ENCODE measurements at regions of chr10 and their contacts with region 1.

Region 1: GRCh38 chr10:102151774-102152544 is at the start of gene NOLC1:
- DNase-seq: peak; percentile 100
- H3K4me3 Mint-ChIP-seq: peak within 1 kb of the TSS; percentile 98
- H3K27ac Mint-ChIP-seq: peak within 1 kb of the TSS; percentile 96
- H3K4me1 Mint-ChIP-seq: peaks cover 53% of the 10 kb centered on the region
- H3K27me3 Mint-ChIP-seq: no peaks in the 10 kb centered on the region
- total RNA-seq, gene NOLC1: 182 to 194 TPM

Region 2: GRCh38 chr10:101848894-101849351 is 303.0 kb before region 1 on chr10:
- CTCF ChIA-PET with region 1: no interaction called
- intact Hi-C with region 1: no loop called
- DNase-seq: no peak
- H3K4me3 Mint-ChIP-seq: no peak overlapping the region
- H3K27ac Mint-ChIP-seq: no peak overlapping the region
- H3K4me1 Mint-ChIP-seq: peaks cover 6% of the 10 kb centered on the region
- H3K27me3 Mint-ChIP-seq: no peaks in the 10 kb centered on the region

Region 3: GRCh38 chr10:102020938-102021337 is 131.0 kb before region 1 on chr10:
- CTCF ChIA-PET with region 1: no interaction called
- intact Hi-C with region 1: no loop called
- DNase-seq: peak; percentile 38
- H3K4me3 Mint-ChIP-seq: no peak overlapping the region
- H3K27ac Mint-ChIP-seq: no peak overlapping the region
- H3K4me1 Mint-ChIP-seq: no peaks in the 10 kb centered on the region
- H3K27me3 Mint-ChIP-seq: no peaks in the 10 kb centered on the region

Region 4: GRCh38 chr10:102055647-102056419 is 96.1 kb before region 1 on chr10 and contains the start of gene ARMH3:
- CTCF ChIA-PET with region 1: no interaction called
- intact Hi-C with region 1: loop called (anchors 2 kb)
- DNase-seq: peak; percentile 96
- H3K4me3 Mint-ChIP-seq: peak within 1 kb of the TSS; percentile 91
- H3K27ac Mint-ChIP-seq: peak within 1 kb of the TSS; percentile 90
- H3K4me1 Mint-ChIP-seq: peaks cover 41% of the 10 kb centered on the region
- H3K27me3 Mint-ChIP-seq: no peaks in the 10 kb centered on the region
- total RNA-seq, gene ARMH3: 12.3 to 12.6 TPM

Region 5: DNA sequence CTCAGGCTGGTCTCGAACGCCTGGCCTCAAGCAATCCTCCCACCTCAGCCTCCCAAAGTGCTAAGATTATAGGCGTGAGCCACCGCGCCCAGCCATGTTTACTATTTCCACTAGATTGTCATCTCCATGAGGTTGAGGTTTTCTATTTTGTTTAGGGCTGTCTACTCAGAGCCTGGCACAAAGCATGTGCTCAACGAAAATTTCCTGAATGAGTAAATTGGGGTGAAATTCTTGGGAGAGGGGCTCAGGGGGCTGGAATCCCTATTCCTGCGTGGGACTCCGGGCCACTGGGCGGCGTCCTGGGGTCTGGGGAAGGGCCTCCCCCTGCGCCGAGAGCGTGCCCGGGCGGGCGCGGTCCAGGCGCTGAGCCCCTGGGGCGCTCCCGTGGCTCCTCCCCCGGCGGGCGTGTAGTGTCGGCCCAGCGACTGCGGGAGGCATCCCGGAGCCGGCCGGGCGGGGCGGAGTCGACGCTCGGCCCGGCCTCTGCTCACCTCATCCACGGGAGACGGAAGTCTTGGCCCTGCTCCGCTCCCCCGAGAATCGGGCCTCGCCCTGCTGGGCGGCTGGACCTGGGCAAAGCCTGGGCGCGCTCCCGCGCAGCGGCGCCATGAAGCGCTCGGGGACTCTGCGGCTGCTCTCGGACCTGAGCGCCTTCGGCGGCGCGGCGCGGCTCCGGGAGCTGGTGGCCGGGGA is 86.9 kb before region 1 on chr10 and contains the start of gene HPS6:
- CTCF ChIA-PET with region 1: no interaction called
- intact Hi-C with region 1: loop called (anchors 1 kb)
- DNase-seq: peak; percentile 91
- H3K4me3 Mint-ChIP-seq: peak within 1 kb of the TSS; percentile 83
- H3K27ac Mint-ChIP-seq: peak within 1 kb of the TSS; percentile 88
- H3K4me1 Mint-ChIP-seq: peaks cover 24% of the 10 kb centered on the region
- H3K27me3 Mint-ChIP-seq: no peaks in the 10 kb centered on the region
- total RNA-seq, gene HPS6: 8.7 to 8.8 TPM

Region 6: GRCh38 chr10:102132563-102133372 is 19.2 kb before region 1 on chr10 and contains the start of gene PPRC1:
- CTCF ChIA-PET with region 1: interaction called, 6 read pairs
- intact Hi-C with region 1: loop called (anchors 1 kb)
- DNase-seq: peak; percentile 99
- H3K4me3 Mint-ChIP-seq: peak within 1 kb of the TSS; percentile 97
- H3K27ac Mint-ChIP-seq: peak within 1 kb of the TSS; percentile 96
- H3K4me1 Mint-ChIP-seq: peaks cover 42% of the 10 kb centered on the region
- H3K27me3 Mint-ChIP-seq: no peaks in the 10 kb centered on the region
- total RNA-seq, gene PPRC1: 54.6 to 55.0 TPM

Region 7: GRCh38 chr10:102432162-102432950 is 280.4 kb after region 1 on chr10 and contains the start of gene CUEDC2:
- CTCF ChIA-PET with region 1: no interaction called
- intact Hi-C with region 1: loop called (anchors 1 kb)
- DNase-seq: peak; percentile 99
- H3K4me3 Mint-ChIP-seq: peak within 1 kb of the TSS; percentile 90
- H3K27ac Mint-ChIP-seq: peak within 1 kb of the TSS; percentile 92
- H3K4me1 Mint-ChIP-seq: peaks cover 47% of the 10 kb centered on the region
- H3K27me3 Mint-ChIP-seq: no peaks in the 10 kb centered on the region
- total RNA-seq, gene CUEDC2: 63.3 to 64.4 TPM